Prostate gland (tissue), 2 donors: ENCODE measurements at regions of chr21 and their contacts with region 1.

Region 1: GRCh38 chr21:15483138-15483780 is 246.5 kb upstream of the USP25 start:
- DNase-seq: peak; percentile 84
- H3K4me3 ChIP-seq: no peak overlapping the region
- H3K27ac ChIP-seq: no peak overlapping the region
- H3K4me1 ChIP-seq: no peaks in the 10 kb centered on the region
- H3K27me3 ChIP-seq: no peaks in the 10 kb centered on the region
- CTCF ChIP-seq: peak; percentile 66 to 88 (median 86)
- POLR2A ChIP-seq: no peak

Region 2: DNA sequence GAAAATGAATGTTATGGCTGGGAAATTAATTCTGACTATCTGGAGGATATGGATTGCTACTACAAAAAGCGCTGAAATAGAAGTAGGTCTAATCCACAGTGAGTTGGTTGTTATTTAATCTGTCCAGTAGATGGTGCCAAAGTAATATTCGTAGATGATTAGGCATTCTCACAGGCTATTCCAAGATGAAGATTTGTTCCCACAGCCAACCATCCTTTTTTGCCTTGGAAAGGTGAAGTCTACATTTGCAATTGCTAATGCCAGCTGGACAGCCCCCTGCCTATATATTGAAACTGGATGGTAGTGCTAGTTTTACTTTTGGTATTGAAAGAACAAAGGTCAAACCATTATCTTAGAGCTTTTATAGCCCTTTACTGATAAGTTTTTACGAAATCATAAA is 1223.5 kb before region 1 on chr21:
- intact Hi-C with region 1: loop called (anchors 10 kb)
- DNase-seq: no peak
- H3K4me3 ChIP-seq: no peak overlapping the region
- H3K27ac ChIP-seq: no peak overlapping the region
- H3K4me1 ChIP-seq: no peaks in the 10 kb centered on the region
- H3K27me3 ChIP-seq: no peaks in the 10 kb centered on the region
- CTCF ChIP-seq: peak in 3 of 4 experiments; percentile 37 to 63 (median 48)
- POLR2A ChIP-seq: no peak

Region 3: DNA sequence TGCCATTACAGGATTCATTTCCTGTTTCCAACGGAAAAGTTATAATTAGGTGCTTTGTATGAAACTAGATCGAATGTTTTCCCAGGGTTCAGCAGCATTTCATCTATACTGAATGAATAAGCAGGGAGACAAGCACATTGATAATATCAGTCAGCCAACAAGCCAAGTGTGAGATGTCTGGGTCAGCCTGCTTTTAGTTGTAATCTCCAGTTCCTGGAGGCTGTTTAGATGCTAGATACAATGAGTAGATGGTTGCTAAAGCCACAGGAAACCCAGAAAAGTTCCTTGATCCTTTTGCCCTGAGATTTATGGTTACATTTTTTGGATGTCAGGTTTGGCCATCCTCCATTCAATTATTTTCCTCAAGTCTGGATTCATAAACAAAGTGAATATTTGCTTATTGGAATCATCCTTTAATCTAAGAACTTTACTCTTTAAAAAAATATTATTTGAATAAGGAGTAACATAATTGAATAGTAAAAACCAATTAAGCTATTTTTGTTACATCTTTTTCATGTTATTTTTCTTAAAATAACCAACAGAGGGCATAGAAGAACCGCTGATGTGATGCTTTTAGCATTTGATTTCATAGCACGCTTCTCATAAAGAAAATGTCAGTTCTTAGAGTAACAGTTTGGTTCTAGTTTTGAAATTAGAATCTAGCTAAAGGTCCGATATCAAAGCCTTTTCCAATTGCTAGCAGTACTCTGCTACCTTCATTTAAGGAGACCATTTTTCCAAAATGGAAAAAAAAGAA is 1176.9 kb before region 1 on chr21:
- intact Hi-C with region 1: loop called (anchors 5 kb)
- DNase-seq: no peak
- H3K4me3 ChIP-seq: no peak overlapping the region
- H3K27ac ChIP-seq: no peak overlapping the region
- H3K4me1 ChIP-seq: no peaks in the 10 kb centered on the region
- H3K27me3 ChIP-seq: no peaks in the 10 kb centered on the region
- CTCF ChIP-seq: peak in 2 of 4 experiments; percentile 30
- POLR2A ChIP-seq: no peak

Region 4: GRCh38 chr21:14403681-14404318 is 1079.5 kb before region 1 on chr21:
- intact Hi-C with region 1: loop called (anchors 10 kb)
- DNase-seq: no peak
- H3K4me3 ChIP-seq: no peak overlapping the region
- H3K27ac ChIP-seq: no peak overlapping the region
- H3K4me1 ChIP-seq: no peaks in the 10 kb centered on the region
- H3K27me3 ChIP-seq: no peaks in the 10 kb centered on the region
- CTCF ChIP-seq: peak in 3 of 4 experiments; percentile 41 to 60 (median 58)
- POLR2A ChIP-seq: no peak

Region 5: GRCh38 chr21:14864211-14865021 is 618.8 kb before region 1 on chr21:
- intact Hi-C with region 1: loop called (anchors 2 kb)
- DNase-seq: peak; percentile 57
- H3K4me3 ChIP-seq: no peak overlapping the region
- H3K27ac ChIP-seq: peak overlapping the region in 1 of 2 donors; percentile 33
- H3K4me1 ChIP-seq: no peaks in the 10 kb centered on the region
- H3K27me3 ChIP-seq: no peaks in the 10 kb centered on the region
- CTCF ChIP-seq: peak in 3 of 4 experiments; percentile 30 to 58 (median 53)
- POLR2A ChIP-seq: no peak

Region 6: GRCh38 chr21:15064576-15065391 is 418.5 kb before region 1 on chr21 and contains the start of gene NRIP1:
- intact Hi-C with region 1: loop called (anchors 10 kb)
- DNase-seq: peak; percentile 89
- H3K4me3 ChIP-seq: peak within 1 kb of the TSS; percentile 88 to 97
- H3K27ac ChIP-seq: peak within 1 kb of the TSS; percentile 96
- H3K4me1 ChIP-seq: no peaks in the 10 kb centered on the region
- H3K27me3 ChIP-seq: no peaks in the 10 kb centered on the region
- CTCF ChIP-seq: no peak
- POLR2A ChIP-seq: peak; percentile 78
- total RNA-seq, gene NRIP1: 29.3 to 43.1 TPM